ENCODE measurements at regions of chr10 and their contacts with region 1.

Region 1: DNA sequence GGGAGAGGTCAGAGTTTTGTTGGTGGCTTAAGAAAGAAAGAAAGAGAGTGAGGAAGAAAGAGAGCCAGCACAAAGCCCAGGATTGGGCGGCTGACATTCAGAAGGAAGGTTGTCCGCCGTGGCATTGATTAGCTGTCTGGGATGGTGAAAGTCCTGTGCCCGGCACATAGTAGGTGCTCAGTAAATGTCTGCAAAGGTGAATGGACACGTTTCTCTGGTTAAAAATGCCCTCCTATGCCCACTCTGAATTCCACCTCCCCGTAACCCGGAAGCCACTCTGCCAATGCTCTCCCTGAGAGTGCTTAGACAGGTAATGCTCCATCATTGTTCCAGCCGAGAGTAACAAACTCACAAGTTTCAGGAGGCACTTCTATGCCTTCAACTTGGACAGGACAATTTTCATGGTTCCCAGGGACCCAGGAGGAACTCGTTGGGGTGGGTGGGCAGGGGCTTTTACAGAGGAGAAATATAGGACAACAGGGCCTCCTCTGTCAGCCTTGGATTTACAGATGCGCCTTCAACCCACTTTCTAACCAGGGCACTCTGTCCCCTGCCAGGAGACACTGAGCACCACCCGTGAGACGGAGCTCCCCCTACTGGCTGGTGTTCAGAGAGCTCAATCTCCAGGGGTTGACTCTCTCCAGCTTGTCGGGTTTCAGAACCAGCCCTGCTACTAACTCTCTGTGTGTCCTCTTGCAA is 411.5 kb upstream of the ZMIZ1 start:
- DNase-seq: peak; percentile 81
- ATAC-seq: peak; percentile 90

Region 2: GRCh38 chr10:78047314-78047891 is 609.9 kb before region 1 on chr10:
- intact Hi-C with region 1: loop called (anchors 10 kb)
- DNase-seq: peak; percentile 91
- ATAC-seq: peak; percentile 81 to 87

Region 3: DNA sequence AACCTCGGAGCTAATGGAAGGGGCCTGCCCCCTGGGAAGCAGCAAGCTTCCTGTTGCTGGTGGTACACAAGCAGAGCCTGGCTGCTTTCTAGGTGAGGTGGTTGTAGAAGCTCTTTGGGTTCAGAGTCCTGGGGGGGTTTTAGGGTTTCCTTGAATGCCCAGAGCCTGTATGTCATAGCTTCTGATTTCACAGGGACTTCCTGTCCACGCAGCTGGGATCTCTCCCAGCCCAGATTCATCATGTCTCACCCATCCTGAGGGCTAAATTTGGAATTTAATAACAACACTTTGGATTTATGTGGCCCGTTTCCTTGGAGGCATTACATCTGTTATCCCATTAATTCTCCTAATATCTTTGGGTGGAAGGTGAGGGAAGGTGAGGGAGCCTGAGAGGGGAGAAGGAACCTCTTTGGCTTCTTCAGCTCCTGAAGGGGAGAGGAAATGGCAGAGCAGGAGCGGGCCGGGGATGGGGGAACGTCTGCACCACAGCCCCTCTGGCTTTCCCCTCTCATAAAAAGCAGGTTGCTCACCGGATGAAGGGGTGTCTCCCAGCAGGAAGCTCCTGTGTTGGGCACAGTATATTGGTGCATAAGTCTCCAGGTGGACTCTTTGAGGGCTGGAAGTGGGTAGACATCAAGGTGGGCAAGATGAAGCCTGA is 604.0 kb before region 1 on chr10:
- intact Hi-C with region 1: loop called (anchors 10 kb)
- DNase-seq: no peak
- ATAC-seq: no peak

Region 4: DNA sequence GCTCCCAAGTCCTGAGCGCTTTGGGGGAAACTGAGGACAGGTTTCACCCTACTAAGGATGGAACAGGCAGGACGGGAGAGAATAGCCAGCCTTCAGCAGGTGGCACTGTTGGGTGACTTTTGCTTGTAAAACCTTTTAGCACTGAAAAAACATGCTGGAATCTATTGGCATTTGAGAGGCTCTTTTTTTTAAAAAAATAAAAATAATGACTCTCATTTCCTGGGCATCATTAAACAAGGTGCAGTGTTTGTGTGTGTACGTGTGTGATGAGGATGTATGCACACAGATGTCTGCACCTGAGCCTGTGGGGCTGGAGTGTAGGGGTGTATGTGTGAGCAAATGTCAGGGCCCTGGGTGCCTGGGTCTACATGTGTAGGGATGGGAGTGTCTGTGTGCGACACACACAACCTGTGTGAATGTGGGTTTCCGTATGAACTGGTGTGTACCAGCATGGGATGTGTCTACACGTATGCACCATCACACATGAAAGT is 445.7 kb before region 1 on chr10:
- intact Hi-C with region 1: loop called in 1 of 2 experiments (anchors 2 kb)
- DNase-seq: no peak
- ATAC-seq: peak in 1 of 2 donors; percentile 16

Region 5: GRCh38 chr10:78688901-78689583 is 31.7 kb after region 1 on chr10:
- intact Hi-C with region 1: no loop called
- DNase-seq: no peak
- ATAC-seq: peak; percentile 38 to 76

Measured in left cardiac atrium (tissue), 4 donors.